ENCODE measurements at regions of chr7 and their contacts with region 1.

Region 1: GRCh38 chr7:5083311-5083711 is 37.7 kb downstream of the RBAK start:
- DNase-seq: no peak
- H3K4me3 ChIP-seq: no peak overlapping the region
- H3K27ac ChIP-seq: no peak overlapping the region
- H3K4me1 ChIP-seq: no peaks in the 10 kb centered on the region
- H3K27me3 ChIP-seq: no peaks in the 10 kb centered on the region
- CTCF ChIP-seq: no peak

Region 2: GRCh38 chr7:4531236-4531635 is 552.1 kb before region 1 on chr7:
- intact Hi-C with region 1: no loop called
- DNase-seq: no peak
- H3K4me3 ChIP-seq: no peak overlapping the region
- H3K27ac ChIP-seq: no peak overlapping the region
- H3K4me1 ChIP-seq: no peaks in the 10 kb centered on the region
- H3K27me3 ChIP-seq: no peaks in the 10 kb centered on the region
- CTCF ChIP-seq: no peak

Region 3: GRCh38 chr7:4797858-4798705 is 285.2 kb before region 1 on chr7:
- intact Hi-C with region 1: loop called (anchors 1 kb)
- DNase-seq: no peak
- H3K4me3 ChIP-seq: no peak overlapping the region
- H3K27ac ChIP-seq: no peak overlapping the region
- H3K4me1 ChIP-seq: peaks cover 0 to 3% of the 10 kb centered on the region in 2 donors
- H3K27me3 ChIP-seq: no peaks in the 10 kb centered on the region
- CTCF ChIP-seq: peak; percentile 74 to 97 (median 95)